ENCODE measurements at regions of chr11 and their contacts with region 1.

Region 1: GRCh38 chr11:118359295-118359958 is at the start of gene UBE4A:
- DNase-seq: peak; percentile 97
- ATAC-seq: peak; percentile 95
- H3K4me3 Mint-ChIP-seq: peak within 1 kb of the TSS; percentile 89
- H3K27ac Mint-ChIP-seq: peak within 1 kb of the TSS; percentile 90
- H3K4me1 Mint-ChIP-seq: peaks cover 36% of the 10 kb centered on the region
- H3K27me3 Mint-ChIP-seq: no peaks in the 10 kb centered on the region
- total RNA-seq, gene UBE4A: 43.4 to 44.4 TPM

Region 2: GRCh38 chr11:118252688-118253087 is 106.7 kb before region 1 on chr11:
- POLR2A ChIA-PET with region 1: no interaction called
- DNase-seq: no peak
- ATAC-seq: no peak
- H3K4me3 Mint-ChIP-seq: peak overlapping the region; percentile 95
- H3K27ac Mint-ChIP-seq: peak overlapping the region; percentile 98
- H3K4me1 Mint-ChIP-seq: peaks cover 24% of the 10 kb centered on the region
- H3K27me3 Mint-ChIP-seq: no peaks in the 10 kb centered on the region

Region 3: DNA sequence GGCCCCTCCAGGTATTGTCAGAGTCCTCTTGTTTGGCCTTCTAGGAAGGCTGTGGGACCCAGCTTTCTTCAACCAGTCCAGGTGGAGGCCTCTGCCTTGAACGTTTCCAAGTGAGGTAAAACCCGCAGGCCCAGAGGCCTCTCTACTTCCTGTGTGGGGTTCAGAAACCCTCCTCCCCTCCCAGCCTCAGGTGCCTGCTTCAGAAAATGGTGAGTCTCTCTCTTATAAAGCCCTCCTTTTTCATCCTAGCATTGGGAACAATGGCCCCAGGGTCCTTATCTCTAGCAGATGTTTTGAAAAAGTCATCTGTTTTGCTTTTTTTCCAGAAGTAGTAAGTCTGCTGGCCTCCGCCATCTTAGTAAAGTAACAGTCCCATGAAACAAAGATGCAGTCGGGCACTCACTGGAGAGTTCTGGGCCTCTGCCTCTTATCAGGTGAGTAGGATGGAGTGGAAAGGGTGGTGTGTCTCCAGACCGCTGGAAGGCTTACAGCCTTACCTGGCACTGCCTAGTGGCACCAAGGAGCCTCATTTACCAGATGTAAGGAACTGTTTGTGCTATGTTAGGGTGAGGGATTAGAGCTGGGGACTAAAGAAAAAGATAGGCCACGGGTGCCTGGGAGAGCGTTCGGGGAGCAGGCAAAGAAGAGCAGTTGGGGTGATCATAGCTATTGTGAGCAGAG is 54.7 kb before region 1 on chr11 and contains the start of gene CD3E:
- POLR2A ChIA-PET with region 1: interaction called, 26 read pairs
- DNase-seq: peak; percentile 70
- ATAC-seq: peak; percentile 79
- H3K4me3 Mint-ChIP-seq: peak within 1 kb of the TSS; percentile 96
- H3K27ac Mint-ChIP-seq: peak within 1 kb of the TSS; percentile 99
- H3K4me1 Mint-ChIP-seq: peaks cover 54% of the 10 kb centered on the region
- H3K27me3 Mint-ChIP-seq: no peaks in the 10 kb centered on the region
- total RNA-seq, gene CD3E: 607 to 630 TPM

Region 4: GRCh38 chr11:118343981-118344515 is 15.4 kb before region 1 on chr11 and contains the start of gene CD3G:
- POLR2A ChIA-PET with region 1: interaction called, 17 read pairs
- DNase-seq: peak; percentile 77
- ATAC-seq: peak; percentile 77
- H3K4me3 Mint-ChIP-seq: peak within 1 kb of the TSS; percentile 89
- H3K27ac Mint-ChIP-seq: peak within 1 kb of the TSS; percentile 97
- H3K4me1 Mint-ChIP-seq: peaks cover 61% of the 10 kb centered on the region
- H3K27me3 Mint-ChIP-seq: no peaks in the 10 kb centered on the region
- total RNA-seq, gene CD3G: 199 to 212 TPM

Region 5: GRCh38 chr11:118401151-118401878 is 41.9 kb after region 1 on chr11 and contains the start of gene ATP5MG:
- POLR2A ChIA-PET with region 1: interaction called, 12 read pairs
- DNase-seq: peak; percentile 89
- ATAC-seq: peak; percentile 61
- H3K4me3 Mint-ChIP-seq: peak within 1 kb of the TSS; percentile 97
- H3K27ac Mint-ChIP-seq: peak within 1 kb of the TSS; percentile 100
- H3K4me1 Mint-ChIP-seq: peaks cover 47% of the 10 kb centered on the region
- H3K27me3 Mint-ChIP-seq: no peaks in the 10 kb centered on the region
- total RNA-seq, gene ATP5MG: 202 to 224 TPM

Measured in activated naive CD8-positive, alpha-beta T cell treated with anti-CD3 and anti-CD28 coated beads, Interleukin-2, amount 10 ng/mL, durations not matched to agents 7 days and 5 days (primary cell).